SK-N-SH (cell line): ENCODE measurements at regions of chr20 and their contacts with region 1.

Region 1: GRCh38 chr20:54680872-54681619 is 205.7 kb downstream of the DOK5 start:
- DNase-seq: peak; percentile 37
- H3K4me3 ChIP-seq: no peak overlapping the region; a peak in 1 of 4 replicates
- H3K27ac ChIP-seq: peak overlapping the region in 1 of 2 experiments; percentile 72; a peak in 2 of 4 replicates
- H3K4me1 ChIP-seq: peaks cover 0 to 18% of the 10 kb centered on the region in 2 experiments; a peak in 2 of 4 replicates
- H3K27me3 ChIP-seq: no peaks in the 10 kb centered on the region
- CTCF ChIP-seq: peak; percentile 75
- EP300 ChIP-seq: peak in 1 of 2 experiments; percentile 13; a peak in 1 of 4 replicates
- RAD21 ChIP-seq: peak; percentile 83

Region 2: GRCh38 chr20:54642851-54643667 is 38.0 kb before region 1 on chr20:
- CTCF ChIA-PET with region 1: no interaction called
- POLR2A ChIA-PET with region 1: no interaction called
- DNase-seq: no peak
- H3K4me3 ChIP-seq: no peak overlapping the region
- H3K27ac ChIP-seq: peak overlapping the region in 1 of 2 experiments; percentile 40; a peak in 1 of 4 replicates
- H3K4me1 ChIP-seq: peaks cover 0 to 9% of the 10 kb centered on the region in 2 experiments; a peak in 1 of 4 replicates
- H3K27me3 ChIP-seq: no peaks in the 10 kb centered on the region
- CTCF ChIP-seq: no peak
- EP300 ChIP-seq: no peak
- RAD21 ChIP-seq: no peak

Region 3: DNA sequence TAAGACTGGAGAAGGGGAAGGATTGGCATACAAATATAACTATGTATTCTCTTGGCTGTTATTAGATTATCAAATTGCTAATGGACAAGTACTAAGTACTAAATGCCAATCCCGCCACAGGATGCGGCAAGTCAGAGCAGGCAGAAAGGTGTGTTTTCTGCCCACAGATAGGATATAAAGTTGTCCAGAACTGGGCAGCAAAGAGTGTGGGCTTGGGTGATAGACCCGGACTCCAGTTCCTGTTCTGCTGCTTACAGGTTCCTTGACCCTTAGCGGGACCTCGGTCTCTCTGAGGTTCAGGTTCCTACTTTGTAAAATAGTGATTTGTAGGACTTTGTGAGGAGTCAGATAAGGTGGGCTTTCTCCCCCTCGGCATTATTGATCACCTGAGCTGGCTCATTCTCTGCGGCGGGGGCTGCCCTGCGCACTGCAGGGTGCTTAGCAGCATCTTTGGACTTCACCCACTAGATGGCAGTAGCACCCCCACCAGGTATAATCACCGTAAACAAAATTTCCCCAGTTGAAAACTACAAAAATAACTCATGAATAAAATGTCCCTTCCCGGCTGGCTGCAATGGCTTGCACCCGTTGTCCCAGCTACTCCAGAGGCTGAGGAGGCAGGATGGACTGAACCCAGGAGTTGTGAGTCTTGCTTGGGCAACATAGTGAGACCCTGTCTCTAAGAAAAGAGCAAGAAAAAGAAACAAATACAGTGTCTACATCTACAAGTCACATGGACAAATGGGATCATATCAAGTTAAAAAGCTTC is 12.6 kb before region 1 on chr20:
- CTCF ChIA-PET with region 1: interaction called, 24 read pairs
- POLR2A ChIA-PET with region 1: no interaction called
- DNase-seq: peak; percentile 29
- H3K4me3 ChIP-seq: no peak overlapping the region; a peak in 1 of 4 replicates
- H3K27ac ChIP-seq: no peak overlapping the region
- H3K4me1 ChIP-seq: no peaks in the 10 kb centered on the region
- H3K27me3 ChIP-seq: no peaks in the 10 kb centered on the region
- CTCF ChIP-seq: peak; percentile 75
- EP300 ChIP-seq: no peak
- RAD21 ChIP-seq: peak; percentile 58

Region 4: DNA sequence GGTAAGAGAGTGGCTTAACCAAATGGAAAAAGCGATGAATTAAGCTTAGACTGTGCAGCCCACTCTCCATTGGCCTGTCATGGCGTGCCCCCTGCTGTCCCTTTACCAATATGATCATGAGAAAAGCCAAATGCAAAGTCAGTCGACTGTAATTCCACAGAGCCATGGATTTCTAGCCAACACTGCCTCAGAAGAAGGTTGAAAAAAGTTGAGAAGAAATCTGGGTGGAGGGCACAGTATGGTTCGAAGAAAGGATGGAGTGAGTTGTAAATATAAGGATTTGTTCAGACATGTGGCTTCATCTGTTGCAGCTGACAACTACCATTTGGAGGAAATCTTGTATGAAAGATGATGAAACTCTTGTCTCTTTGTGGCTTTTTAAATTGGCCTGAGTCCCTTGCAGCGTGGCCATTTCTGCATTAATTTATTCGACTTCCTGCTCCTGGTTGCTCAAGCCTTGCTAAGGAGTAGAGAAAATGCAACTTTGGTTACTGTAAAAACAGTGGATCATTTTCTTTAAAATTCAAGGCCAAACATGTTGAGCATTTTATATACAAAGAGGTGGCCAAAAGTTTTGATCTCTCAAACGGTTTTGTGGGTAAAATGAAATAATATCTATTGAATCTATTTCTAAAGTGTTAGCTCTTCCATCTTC is 45.8 kb after region 1 on chr20:
- CTCF ChIA-PET with region 1: interaction called, 13 read pairs
- POLR2A ChIA-PET with region 1: no interaction called
- DNase-seq: no peak
- H3K4me3 ChIP-seq: no peak overlapping the region
- H3K27ac ChIP-seq: no peak overlapping the region
- H3K4me1 ChIP-seq: no peaks in the 10 kb centered on the region
- H3K27me3 ChIP-seq: no peaks in the 10 kb centered on the region
- CTCF ChIP-seq: no peak
- EP300 ChIP-seq: no peak
- RAD21 ChIP-seq: peak; percentile 24; the same call in 1 of the 2 replicates

Region 5: GRCh38 chr20:56171087-56172012 is 1490.3 kb after region 1 on chr20:
- CTCF ChIA-PET with region 1: interaction called, 18 read pairs
- POLR2A ChIA-PET with region 1: no interaction called
- DNase-seq: peak; percentile 61
- H3K4me3 ChIP-seq: no peak overlapping the region
- H3K27ac ChIP-seq: no peak overlapping the region
- H3K4me1 ChIP-seq: peaks cover 0 to 2% of the 10 kb centered on the region in 2 experiments; a peak in 1 of 4 replicates
- H3K27me3 ChIP-seq: no peaks in the 10 kb centered on the region
- CTCF ChIP-seq: no peak
- EP300 ChIP-seq: no peak
- RAD21 ChIP-seq: peak; percentile 88

Region 6: DNA sequence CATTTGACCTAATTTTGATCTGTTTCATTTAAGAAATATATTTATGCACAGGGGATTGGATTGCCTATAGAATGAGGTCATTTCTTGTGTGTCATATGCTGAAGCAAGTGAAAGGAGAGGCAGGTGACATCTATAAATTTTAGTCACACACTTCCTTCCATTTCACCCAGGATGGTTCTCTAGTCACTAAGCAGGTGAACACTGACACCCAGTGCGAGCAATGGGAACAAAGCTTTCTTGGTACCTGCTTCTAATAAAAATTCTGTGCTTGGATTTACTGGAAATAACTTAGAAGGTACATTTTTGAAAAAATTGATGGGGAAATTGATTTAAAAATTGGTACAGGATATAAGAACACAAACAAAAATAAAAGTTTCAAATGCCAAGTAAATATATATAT is 1500.5 kb after region 1 on chr20:
- CTCF ChIA-PET with region 1: interaction called, 19 read pairs
- POLR2A ChIA-PET with region 1: no interaction called
- DNase-seq: peak; percentile 34
- H3K4me3 ChIP-seq: no peak overlapping the region
- H3K27ac ChIP-seq: no peak overlapping the region
- H3K4me1 ChIP-seq: no peaks in the 10 kb centered on the region
- H3K27me3 ChIP-seq: no peaks in the 10 kb centered on the region
- CTCF ChIP-seq: no peak
- EP300 ChIP-seq: no peak
- RAD21 ChIP-seq: peak; percentile 79